Cardiac septum (tissue), 1 donor: ENCODE measurements at regions of chr13 and their contacts with region 1.

Region 1: DNA sequence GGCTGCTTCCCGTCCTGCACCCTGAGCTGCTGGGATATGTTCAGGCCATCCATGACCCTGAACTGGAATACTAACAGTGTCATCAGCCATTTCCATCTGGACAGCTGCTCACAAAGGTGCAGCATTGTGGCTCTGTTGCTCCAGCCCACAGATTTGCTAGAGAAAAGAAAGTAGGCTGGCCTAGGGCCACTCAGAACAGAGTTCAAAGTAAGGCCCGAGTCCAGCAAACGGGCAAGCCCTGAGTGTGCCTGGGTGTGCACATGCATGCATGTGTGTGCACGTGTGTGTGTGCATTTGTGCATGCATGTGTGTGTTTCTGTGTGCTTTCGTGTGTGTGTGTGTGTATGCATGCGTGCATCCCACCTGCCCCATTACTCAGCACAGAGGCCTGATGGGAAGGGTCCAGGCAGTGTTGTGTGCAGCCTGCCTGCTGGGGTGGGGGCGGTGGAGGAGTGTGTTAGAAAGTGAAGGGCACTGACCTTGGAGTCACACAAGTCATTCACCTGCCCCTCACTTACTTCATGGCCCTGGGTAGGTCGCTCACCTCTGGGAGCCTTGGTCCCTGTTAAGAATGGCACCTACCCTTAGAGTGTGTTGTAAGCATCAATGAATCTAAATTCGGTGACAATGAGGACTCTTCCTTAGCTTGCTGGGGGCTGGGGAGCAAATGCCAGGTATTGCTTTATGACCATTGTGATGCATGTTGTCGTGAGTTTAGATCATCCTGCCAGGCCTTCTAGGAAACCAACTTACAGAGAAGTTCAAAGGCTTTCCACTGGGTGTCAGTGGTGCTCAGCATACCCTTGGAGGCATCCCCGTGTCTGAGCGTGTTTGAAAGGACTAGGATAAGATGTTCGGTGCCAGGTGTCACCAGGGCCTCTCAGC is 53.2 kb downstream of the GPR12 start:
- DNase-seq: no peak

Region 2: DNA sequence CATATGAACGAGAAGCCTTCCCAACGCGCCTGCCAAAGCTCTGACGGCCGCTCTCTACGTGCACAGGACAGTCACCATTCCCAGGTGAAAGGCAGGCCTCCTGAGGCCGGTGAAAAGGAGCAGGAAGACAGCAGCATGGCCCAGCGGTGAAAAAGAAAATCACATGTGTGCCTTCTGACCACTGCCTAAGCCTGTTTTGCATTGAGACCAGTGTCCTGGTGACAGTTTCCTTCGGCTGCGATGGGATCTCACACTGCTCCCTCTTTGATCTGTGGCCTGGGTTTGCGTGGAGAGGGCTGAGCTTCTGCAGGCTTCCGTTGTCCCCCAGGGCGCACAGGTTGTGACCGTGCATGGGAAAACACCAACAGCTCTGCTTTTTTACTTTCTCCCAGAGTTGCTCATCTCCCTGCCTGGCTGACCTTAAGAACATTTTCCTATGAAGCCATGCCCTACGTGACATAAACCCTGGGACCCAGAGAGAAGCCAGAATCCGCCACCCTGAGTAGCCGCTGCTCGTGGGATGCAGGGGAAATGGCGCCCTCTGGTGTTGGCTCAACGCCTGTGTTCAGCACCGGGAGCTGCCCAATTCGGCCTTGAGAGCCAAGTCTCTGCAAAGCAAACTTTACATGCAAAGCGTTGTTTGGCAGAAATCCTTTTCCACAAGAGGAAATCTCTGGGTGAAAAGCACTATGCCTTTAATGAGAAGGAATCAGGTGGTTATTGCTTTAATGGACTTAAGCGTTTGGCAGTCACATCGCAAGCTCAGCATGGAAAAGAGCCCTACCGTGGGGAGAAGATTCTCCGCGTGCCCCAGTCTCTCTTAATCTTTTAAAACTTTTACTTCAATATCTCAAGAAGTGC is 165.4 kb after region 1 on chr13:
- intact Hi-C with region 1: loop called (anchors 2 kb)
- DNase-seq: no peak

Region 3: GRCh38 chr13:26929971-26930730 is 222.8 kb after region 1 on chr13:
- intact Hi-C with region 1: loop called (anchors 2 kb)
- DNase-seq: no peak